Activated T-helper 1 cell treated with anti-CD3 and anti-CD28 coated beads, Interleukin-12 subunit alpha, Interleukin-12 subunit beta, Interleukin-2, Interleukin-4 antibody, amounts not matched to agents 30 ng/mL and 10 ng/mL and 1 ng/mL, durations not matched to agents 14 hours and 24 hours and 36 hours (primary cell): ENCODE measurements at regions of chr21 and their contacts with region 1.

Region 1: DNA sequence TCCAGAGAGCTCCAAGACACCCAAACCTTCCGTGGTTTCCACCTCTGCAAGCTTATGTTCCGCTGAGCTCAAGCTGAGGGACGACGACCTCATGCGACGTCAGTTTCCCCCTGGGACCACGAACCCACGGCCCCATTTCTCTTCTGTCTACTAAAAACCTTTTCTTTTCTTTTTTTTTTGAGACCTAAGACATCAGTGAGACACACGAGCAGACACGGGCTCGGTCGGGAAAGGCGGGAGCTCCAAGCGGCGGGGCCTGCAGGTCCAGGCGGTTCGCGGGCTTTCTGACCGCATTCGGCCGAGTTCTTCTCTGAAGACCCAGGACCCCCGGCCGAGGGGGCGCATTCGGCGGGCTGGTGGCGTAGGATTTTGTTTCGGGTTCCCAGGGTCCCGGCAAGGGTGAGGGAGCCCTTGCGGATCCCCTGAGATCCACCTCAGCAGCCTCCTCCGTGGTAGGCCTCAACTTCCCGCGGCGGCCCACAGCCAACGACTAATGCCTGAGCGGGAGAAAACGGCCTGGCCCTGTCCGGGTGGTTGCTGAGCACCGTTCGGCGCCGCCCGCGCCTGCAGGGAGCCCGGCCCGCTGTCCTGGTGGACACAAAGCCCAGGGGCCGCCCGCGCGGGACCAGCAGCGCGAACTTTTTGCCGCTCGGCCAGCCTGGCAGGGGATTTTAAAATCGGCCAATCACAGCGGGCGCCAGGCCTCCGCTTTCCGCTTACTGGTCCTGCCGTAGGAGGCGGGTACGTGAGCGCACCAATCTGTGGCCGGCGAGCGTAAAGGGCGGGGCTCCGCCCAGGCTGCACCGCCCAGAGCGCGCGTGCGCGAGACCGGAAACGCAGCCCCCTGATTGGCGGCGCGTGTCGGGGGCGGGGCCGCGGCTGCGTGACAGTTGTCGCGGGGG is at the start of gene C21orf58:
- DNase-seq: peak; percentile 99
- H3K4me3 Mint-ChIP-seq: peak within 1 kb of the TSS; percentile 93
- H3K27ac Mint-ChIP-seq: peak within 1 kb of the TSS; percentile 98
- H3K4me1 Mint-ChIP-seq: peaks cover 43% of the 10 kb centered on the region
- H3K27me3 Mint-ChIP-seq: no peaks in the 10 kb centered on the region
- total RNA-seq, gene C21orf58: 26.7 and 26.9 TPM in 2 replicates

Region 2: DNA sequence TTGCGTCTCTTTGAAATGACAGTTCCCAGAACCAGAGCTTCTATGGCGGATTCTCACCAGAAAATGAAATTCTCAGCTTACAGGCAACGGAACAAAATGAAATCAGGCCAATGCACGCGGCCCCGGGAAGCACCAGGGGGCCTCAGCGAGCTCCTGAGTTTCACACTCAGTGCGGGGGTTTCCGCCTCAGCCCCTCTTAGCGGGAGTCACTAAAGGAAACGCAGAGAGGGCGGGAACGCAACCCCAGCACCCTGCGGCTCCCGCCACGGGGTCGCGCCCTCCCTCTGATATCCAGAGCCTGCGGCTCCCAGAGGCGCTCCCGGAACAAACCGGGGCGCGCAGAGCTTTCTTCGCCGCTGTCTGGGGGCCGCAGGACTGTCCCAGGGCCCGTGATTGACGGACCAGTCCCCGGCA is 349.8 kb before region 1 on chr21:
- intact Hi-C with region 1: loop called (anchors 10 kb)
- DNase-seq: peak; percentile 64
- H3K4me3 Mint-ChIP-seq: peak overlapping the region; percentile 83
- H3K27ac Mint-ChIP-seq: peak overlapping the region; percentile 67
- H3K4me1 Mint-ChIP-seq: peaks cover 7% of the 10 kb centered on the region
- H3K27me3 Mint-ChIP-seq: peaks cover 31% of the 10 kb centered on the region

Region 3: GRCh38 chr21:46184625-46185555 is 138.6 kb before region 1 on chr21:
- intact Hi-C with region 1: loop called (anchors 1 kb)
- DNase-seq: peak; percentile 72
- H3K4me3 Mint-ChIP-seq: peak overlapping the region; percentile 85
- H3K27ac Mint-ChIP-seq: peak overlapping the region; percentile 71
- H3K4me1 Mint-ChIP-seq: no peaks in the 10 kb centered on the region
- H3K27me3 Mint-ChIP-seq: no peaks in the 10 kb centered on the region

Region 4: GRCh38 chr21:46368533-46369285 is 45.2 kb after region 1 on chr21:
- intact Hi-C with region 1: loop called (anchors 2 kb)
- DNase-seq: peak; percentile 57
- H3K4me3 Mint-ChIP-seq: peak overlapping the region; percentile 73
- H3K27ac Mint-ChIP-seq: peak overlapping the region; percentile 90
- H3K4me1 Mint-ChIP-seq: peaks cover 24% of the 10 kb centered on the region
- H3K27me3 Mint-ChIP-seq: no peaks in the 10 kb centered on the region

Region 5: DNA sequence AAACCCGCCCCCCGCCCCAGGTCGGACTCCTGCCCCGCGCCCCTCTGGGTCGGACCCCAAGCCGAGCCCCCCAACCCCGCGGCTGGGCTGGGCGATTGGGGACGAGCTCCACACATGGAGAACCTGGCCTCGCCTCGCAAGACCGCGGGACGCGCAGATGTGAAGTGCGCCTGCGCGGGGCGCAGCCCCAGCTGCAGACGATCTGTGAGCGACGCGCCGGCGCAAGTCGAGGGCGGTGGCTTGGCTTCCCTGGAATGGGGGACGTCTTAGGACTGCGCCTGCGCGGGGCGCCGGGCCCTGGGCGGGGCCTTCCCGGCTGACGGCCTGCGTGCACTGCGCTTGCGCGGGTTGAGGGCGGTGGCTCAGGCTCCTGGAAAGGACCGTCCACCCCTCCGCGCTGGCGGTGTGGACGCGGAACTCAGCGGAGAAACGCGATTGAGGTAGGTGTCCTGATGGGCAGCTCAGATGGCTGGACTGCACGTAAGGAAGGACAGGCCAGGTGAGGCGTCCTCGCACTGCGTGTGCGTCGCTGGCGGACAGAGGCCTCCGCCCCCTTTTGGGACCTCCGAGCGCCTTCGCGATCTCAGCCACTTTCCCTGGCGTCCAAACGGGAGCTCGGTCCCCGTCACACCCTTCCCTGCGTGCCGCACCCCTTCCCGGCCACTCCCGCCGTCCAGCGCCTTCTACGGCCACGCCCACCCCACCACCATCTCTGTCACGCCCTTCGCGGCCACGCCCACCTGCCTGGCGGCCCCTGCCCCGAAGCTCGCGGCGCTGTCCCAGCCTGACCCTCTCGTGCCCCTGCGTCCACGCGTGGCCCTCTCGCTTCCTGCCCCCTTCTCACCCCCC is 312.1 kb after region 1 on chr21 and contains the start of gene PRMT2:
- intact Hi-C with region 1: loop called (anchors 1 kb)
- DNase-seq: peak; percentile 98
- H3K4me3 Mint-ChIP-seq: peak within 1 kb of the TSS; percentile 93
- H3K27ac Mint-ChIP-seq: peak within 1 kb of the TSS; percentile 90
- H3K4me1 Mint-ChIP-seq: peaks cover 69% of the 10 kb centered on the region
- H3K27me3 Mint-ChIP-seq: peaks cover 8% of the 10 kb centered on the region
- total RNA-seq, gene PRMT2: 55.7 and 58.7 TPM in 2 replicates